Endothelial cell of umbilical vein (primary cell): ENCODE measurements at regions of chr7 and their contacts with region 1.

Region 1: GRCh38 chr7:22782616-22783232 is 39.9 kb downstream of the TOMM7 start:
- DNase-seq: peak; percentile 65
- H3K4me3 ChIP-seq: no peak overlapping the region
- H3K27ac ChIP-seq: no peak overlapping the region
- H3K4me1 ChIP-seq: no peaks in the 10 kb centered on the region
- H3K27me3 ChIP-seq: no peaks in the 10 kb centered on the region
- CTCF ChIP-seq: peak; percentile 94 to 95
- POLR2A ChIP-seq: no peak

Region 2: DNA sequence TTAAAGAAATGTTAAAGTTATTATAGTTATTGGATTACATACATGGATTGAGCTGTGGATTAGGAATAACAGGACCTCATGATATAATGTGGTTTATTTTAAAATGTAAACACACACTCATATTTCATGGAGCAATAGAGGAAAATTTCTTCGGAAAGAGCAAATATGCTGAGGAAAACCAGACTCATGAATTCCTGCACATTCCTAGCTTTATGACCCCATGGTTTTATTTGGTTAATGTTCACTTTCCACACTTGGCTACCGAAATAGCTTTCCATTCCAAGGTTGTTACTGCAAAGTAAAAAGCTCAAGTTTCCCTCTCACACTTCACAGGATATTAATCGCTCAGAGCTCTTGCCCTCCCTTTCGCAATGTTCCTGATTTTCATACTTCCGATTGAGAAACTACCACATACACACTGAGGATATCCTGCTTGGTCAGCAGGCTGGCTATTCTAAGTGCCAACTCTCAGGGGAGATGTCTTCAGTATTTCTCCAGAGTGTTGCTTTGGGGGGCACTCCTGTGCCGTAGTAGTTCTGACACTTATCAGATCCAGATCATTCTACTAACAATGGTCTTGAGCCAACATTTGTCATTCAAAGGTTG is 205.2 kb before region 1 on chr7:
- CTCF ChIA-PET with region 1: interaction called, 18 read pairs
- POLR2A ChIA-PET with region 1: no interaction called
- dilution Hi-C with region 1: no loop called
- intact Hi-C with region 1: no loop called
- DNase-seq: peak; percentile 94
- H3K4me3 ChIP-seq: peak overlapping the region in 1 of 3 experiments; percentile 34
- H3K27ac ChIP-seq: peak overlapping the region; percentile 99
- H3K4me1 ChIP-seq: peaks cover 47% of the 10 kb centered on the region
- H3K27me3 ChIP-seq: no peaks in the 10 kb centered on the region
- CTCF ChIP-seq: no peak
- POLR2A ChIP-seq: peak; percentile 20

Region 3: DNA sequence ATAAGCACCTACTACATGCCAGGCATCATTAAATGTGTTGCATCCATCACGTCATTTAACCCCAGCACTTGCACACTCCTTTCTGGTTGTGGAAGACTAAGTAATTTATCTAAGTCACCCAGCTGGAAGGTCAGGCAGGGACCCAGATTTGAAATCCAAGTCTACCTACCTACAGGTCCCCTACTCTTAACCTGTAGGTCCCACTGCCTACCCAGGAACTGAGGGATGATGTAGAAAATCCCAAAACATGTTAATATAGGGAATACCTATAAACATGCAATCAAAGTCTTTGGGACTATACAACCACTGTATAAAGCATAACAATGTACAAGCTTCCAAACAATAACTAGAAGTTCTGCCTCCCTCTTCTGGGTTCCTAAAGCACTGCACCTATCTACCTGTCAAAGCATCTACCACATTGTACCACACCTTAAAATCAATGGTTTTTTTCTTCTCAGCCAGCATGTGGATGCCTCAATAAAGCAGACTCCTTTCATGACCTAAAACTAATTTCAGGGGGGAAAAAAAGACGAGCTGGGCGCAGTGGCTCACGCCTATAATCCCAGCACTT is 50.1 kb before region 1 on chr7:
- CTCF ChIA-PET with region 1: interaction called, 55 read pairs
- POLR2A ChIA-PET with region 1: no interaction called
- dilution Hi-C with region 1: no loop called
- intact Hi-C with region 1: loop called (anchors 1 kb)
- DNase-seq: peak; percentile 45
- H3K4me3 ChIP-seq: no peak overlapping the region
- H3K27ac ChIP-seq: no peak overlapping the region
- H3K4me1 ChIP-seq: peaks cover 25% of the 10 kb centered on the region
- H3K27me3 ChIP-seq: no peaks in the 10 kb centered on the region
- CTCF ChIP-seq: peak; percentile 24 to 42
- POLR2A ChIP-seq: peak; percentile 38

Region 4: DNA sequence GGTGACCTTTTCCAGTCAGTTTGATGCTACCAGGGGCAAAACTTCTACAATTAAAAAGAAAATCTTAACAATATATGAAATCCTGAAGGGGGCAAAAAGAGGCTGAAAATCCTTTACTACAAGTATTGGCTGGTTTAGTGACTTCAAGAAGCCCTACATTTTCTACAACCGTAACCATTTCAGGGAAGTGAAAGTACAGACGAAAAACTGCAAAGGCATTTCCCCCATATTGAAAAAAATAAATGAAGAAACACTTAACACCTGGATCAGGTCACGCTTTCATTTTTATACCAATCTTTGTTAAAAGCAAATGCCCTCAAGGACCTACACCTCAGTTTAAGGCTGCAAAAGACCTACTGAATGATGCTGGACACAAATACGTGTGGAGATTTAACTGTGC is 17.1 kb before region 1 on chr7:
- CTCF ChIA-PET with region 1: interaction called, 13 read pairs
- POLR2A ChIA-PET with region 1: no interaction called
- dilution Hi-C with region 1: no loop called
- intact Hi-C with region 1: no loop called
- DNase-seq: no peak
- H3K4me3 ChIP-seq: no peak overlapping the region
- H3K27ac ChIP-seq: no peak overlapping the region
- H3K4me1 ChIP-seq: no peaks in the 10 kb centered on the region
- H3K27me3 ChIP-seq: peaks cover 3 to 4% of the 10 kb centered on the region in 2 experiments
- CTCF ChIP-seq: no peak
- POLR2A ChIP-seq: no peak